PC-9 (cell line): ENCODE measurements at regions of chr9 and their contacts with region 1.

Region 1: GRCh38 chr9:79233542-79233941 is 338.2 kb upstream of the TLE4 start:
- DNase-seq: peak in 1 of 2 experiments; percentile 43
- H3K4me3 ChIP-seq: no peak overlapping the region
- H3K27ac ChIP-seq: no peak overlapping the region
- H3K4me1 ChIP-seq: no peaks in the 10 kb centered on the region
- H3K27me3 ChIP-seq: no peaks in the 10 kb centered on the region
- CTCF ChIP-seq: peak; percentile 49; the same call in 1 of the 2 replicates

Region 2: DNA sequence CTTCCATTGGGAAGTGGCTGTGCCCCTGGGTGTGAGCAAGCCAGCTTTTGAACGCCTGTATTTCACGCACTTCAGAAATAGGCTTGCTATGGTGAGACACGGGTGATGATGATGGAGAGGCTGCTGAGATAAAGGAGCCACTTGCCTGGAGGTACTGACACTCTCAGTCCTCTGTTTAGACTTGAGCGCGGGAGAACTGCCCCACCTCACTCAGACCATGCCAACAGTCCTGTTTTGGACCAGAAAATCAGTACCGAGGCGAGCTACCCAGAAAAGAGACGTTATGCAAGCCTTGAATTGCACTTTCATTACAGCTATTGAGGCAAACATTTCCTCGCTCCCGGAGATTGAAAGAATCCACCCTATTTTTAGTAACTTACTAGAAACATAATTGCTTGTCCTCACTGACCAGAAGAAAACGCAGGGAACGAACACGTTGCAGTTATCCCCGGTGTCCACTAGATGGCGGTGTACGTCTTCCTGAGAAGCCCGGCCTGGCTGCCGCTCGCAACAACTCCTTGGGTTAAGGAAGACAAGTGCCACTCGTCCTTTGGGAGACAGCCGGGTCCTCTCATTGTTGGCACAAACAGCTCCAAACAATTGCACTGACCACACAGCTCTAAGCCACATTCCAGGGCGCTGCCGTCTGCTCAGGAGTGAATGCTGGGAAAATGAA is 794.2 kb before region 1 on chr9:
- CTCF ChIA-PET with region 1: no interaction called
- POLR2A ChIA-PET with region 1: no interaction called
- intact Hi-C with region 1: loop called (anchors 10 kb)
- DNase-seq: peak; percentile 66 to 77
- H3K4me3 ChIP-seq: no peak overlapping the region
- H3K27ac ChIP-seq: no peak overlapping the region
- H3K4me1 ChIP-seq: no peaks in the 10 kb centered on the region
- H3K27me3 ChIP-seq: peaks cover 74% of the 10 kb centered on the region
- CTCF ChIP-seq: peak; percentile 93

Region 3: DNA sequence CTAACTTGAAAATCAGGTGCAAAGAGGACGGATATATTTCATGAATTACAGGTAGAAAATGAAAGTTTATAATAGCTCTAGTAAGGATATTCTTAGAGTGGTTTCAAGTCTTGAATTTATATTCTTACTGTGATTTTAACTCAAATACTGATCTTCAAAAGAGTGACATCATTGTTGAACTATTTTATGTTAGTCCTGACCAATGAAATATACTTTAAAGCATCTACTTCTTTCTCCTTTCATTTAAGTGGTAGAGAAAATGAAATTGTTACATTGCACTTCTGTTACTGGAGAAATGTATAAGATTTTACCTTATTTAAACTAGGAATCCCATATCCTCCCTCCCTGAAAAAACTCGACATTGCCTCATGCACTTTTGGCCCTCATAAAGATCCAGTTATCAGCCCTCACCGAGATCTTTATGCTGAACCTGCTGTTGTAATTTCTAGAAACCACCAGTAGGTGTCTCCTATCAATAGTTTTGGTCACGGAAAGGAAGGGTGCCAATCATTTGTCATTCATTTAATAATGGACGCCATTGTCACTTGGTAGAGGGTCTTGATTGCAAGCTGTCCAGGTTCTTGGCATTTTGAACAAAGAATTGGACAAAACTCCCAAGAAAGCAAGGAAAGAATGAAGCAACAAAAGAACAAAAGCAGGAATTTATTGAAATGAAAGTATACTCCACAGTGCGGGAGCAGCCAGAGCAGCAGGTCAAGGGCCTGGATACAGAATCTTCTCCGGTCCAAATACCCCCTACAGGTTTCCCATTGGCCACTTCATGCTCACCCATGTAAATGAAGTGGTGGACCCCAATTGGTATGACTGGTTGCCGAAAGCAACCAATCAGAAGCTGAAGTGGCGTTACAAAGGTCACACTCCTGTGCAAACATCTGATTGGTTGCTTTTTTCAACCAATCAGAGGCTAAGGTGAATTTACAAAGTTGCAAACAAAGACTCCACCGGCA is 412.4 kb before region 1 on chr9:
- CTCF ChIA-PET with region 1: interaction called, 3 read pairs
- POLR2A ChIA-PET with region 1: no interaction called
- intact Hi-C with region 1: loop called (anchors 10 kb)
- DNase-seq: no peak
- H3K4me3 ChIP-seq: no peak overlapping the region
- H3K27ac ChIP-seq: no peak overlapping the region
- H3K4me1 ChIP-seq: no peaks in the 10 kb centered on the region
- H3K27me3 ChIP-seq: no peaks in the 10 kb centered on the region
- CTCF ChIP-seq: peak; percentile 87

Region 4: GRCh38 chr9:79129865-79130480 is 103.6 kb before region 1 on chr9:
- CTCF ChIA-PET with region 1: no interaction called
- POLR2A ChIA-PET with region 1: no interaction called
- intact Hi-C with region 1: loop called (anchors 5 kb)
- DNase-seq: peak in 1 of 2 experiments; percentile 51
- H3K4me3 ChIP-seq: no peak overlapping the region
- H3K27ac ChIP-seq: no peak overlapping the region
- H3K4me1 ChIP-seq: no peaks in the 10 kb centered on the region
- H3K27me3 ChIP-seq: no peaks in the 10 kb centered on the region; the same call in none of the 2 replicates
- CTCF ChIP-seq: peak; percentile 76